ENCODE measurements at regions of chr1 and their contacts with region 1.

Region 1: DNA sequence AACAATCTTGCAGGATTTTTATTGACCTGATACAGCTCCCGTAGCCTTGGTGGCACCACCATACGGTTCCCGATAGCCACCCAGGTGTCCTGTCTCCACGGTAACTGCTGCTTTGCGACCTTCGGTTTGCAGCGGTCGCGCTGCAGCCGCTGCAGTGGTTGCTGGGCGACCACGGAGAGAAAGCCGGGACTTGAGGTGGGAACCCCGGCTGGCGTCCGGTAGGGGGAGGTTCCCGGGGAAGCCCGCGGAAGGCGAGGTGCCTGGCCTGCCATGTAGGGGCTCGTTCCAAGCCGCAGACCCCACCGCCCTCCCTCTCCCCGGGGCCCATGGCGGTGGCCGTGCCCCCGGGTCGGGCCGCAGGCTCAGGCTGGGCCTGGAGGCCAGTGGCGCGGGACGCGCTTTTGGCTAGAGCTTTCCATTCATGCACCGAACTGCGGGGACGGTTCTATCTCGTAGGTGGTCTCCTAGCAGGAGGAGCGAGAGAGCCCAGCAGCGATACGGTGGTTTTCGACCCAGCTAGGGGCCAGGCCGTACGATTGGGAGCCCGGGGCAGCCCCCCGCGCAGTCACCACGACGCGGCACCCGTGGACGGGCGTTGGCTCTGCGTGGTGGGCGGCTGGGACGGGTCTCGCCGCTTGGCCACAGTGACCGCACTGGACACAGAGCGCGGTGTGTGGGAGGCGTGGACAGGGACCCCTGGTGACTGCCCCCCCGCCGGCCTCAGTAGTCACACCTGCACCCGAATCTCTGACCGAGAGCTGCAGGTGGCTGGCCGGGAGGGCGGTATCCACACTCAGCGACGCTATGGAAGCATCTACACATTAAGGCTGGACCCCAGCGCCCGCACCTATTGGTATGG is at the start of gene KLHDC9:
- DNase-seq: peak; percentile 90 to 93 (median 93)
- ATAC-seq: peak; percentile 95
- H3K4me3 ChIP-seq: peak within 1 kb of the TSS; percentile 50
- H3K4me1 ChIP-seq: no peaks in the 10 kb centered on the region
- CTCF ChIP-seq: peak; percentile 8
- total RNA-seq, gene KLHDC9: 9.5 to 10.7 (median 9.7) TPM

Region 2: DNA sequence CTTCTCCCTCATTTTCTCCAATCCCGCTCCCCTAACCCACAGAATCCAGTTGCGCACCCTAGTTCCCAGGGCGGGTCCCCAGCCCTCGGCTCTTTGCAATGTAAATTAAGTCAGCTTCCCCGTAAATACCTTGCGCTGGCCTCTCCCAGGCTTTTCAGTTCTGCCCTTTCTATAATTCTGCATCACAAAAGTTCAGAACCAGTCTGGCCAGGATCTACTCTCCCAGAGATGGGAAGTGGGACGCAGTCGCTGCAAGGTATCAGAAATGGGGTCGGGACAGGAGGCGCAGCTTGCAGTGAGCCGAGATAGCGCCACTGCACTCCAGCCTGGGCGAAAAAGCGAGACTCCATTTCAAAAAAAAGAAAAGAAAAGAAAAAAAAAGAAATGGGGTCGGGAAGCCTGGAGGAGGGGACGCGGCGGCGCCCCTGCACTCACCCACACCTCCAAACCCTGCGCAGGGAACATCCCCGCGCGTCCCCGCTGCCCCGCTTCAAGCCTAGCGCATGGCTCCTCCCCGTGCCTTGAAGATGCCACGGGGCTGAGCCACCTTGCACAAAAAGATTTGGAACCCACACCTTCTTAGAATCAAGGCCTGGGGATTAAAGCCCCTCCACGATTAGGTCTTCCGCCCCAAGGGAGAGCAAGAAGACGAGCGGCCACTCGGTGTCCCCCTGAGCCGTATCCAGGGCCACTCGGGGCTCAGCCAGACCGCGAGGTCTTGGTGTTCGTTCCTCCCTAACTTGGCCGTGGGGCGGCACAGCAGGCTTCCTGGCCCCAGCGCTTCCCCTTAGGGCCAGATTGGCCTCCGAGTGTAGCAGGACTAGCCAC is 116.6 kb before region 1 on chr1:
- intact Hi-C with region 1: no loop called
- DNase-seq: no peak
- ATAC-seq: peak; percentile 28
- H3K4me3 ChIP-seq: no peak overlapping the region
- H3K4me1 ChIP-seq: no peaks in the 10 kb centered on the region
- CTCF ChIP-seq: no peak

Region 3: GRCh38 chr1:160997323-160998038 is 101.0 kb before region 1 on chr1:
- intact Hi-C with region 1: loop called (anchors 5 to 10 kb)
- DNase-seq: peak in 2 of 3 donors; percentile 78 to 86
- ATAC-seq: peak; percentile 87
- H3K4me3 ChIP-seq: no peak overlapping the region
- H3K4me1 ChIP-seq: peaks cover 3% of the 10 kb centered on the region
- CTCF ChIP-seq: peak; percentile 38

Region 4: DNA sequence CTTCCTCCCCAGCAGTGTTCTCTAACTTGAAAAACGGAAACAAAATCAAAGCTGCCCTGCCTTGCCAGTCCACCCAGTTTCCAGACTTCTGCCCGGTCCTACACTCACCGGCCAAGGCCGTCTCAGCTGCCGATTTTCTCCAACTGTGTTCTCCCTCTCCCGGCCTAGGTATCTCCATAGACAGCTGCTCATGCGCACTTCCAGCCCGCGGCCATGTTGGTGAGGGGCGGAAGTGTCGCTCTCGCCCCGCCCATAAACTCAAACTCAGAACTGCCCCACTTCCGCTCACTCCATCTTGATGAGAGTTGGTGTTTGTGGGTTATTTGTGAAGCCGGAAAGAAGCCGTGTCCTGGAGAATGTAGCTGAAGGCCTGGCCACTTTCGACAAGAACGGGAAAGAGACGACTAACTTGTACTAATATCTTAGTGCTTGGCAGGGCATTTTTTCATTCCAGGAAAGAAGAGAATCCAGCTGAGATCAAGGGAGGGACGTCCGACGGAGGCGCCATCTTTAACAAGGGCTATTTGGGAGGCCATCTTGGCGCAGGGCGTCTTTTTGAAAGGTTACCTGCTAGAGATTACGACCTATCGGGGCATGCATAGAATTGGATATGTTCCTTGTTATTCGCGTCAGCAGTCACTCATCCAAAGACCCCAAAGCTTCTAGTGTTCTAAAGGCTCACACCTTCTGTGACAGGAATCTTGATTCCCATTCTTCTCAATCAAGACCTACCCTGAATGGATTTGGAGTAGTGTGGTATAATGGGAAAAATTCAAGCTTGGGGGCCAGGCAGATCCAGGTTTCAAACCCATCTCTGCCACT is 52.5 kb before region 1 on chr1 and contains the start of gene USF1:
- intact Hi-C with region 1: loop called in 1 of 2 experiments (anchors 5 kb)
- DNase-seq: peak; percentile 95 to 96 (median 96)
- ATAC-seq: peak; percentile 94
- H3K4me3 ChIP-seq: peak within 1 kb of the TSS; percentile 74
- H3K4me1 ChIP-seq: peaks cover 7% of the 10 kb centered on the region
- CTCF ChIP-seq: no peak
- total RNA-seq, gene USF1: 66.8 to 80.5 (median 71.7) TPM

Region 5: DNA sequence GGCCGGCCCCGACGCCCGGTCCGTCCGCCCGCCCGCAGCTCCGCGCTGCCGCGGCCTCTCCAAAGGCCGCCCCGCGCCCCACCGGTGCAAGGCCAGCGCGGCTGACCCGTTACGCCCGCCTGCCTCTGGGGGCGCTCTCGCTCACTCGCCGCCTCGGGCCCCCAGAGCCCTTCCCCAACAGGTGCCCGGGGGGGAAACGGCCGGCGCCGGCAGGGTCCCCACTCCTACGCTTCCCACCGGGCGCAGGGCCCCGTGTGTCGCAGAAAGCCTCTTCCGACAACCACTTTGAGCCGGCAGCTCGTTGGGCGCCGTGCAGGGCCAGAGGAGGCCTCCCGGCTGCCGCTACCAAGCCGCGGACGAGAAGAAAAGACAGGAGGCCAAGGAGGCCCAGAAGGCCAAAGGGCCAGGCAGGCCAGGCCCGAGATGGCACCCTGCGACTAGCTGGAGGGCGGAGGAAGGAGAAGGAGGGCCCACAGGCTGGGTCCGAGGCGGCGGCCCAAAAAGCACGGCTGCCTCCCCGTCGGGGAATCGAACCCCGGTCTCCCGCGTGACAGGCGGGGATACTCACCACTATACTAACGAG is 342.0 kb after region 1 on chr1:
- intact Hi-C with region 1: no loop called
- DNase-seq: peak; percentile 63 to 76 (median 68)
- ATAC-seq: peak; percentile 42
- H3K4me3 ChIP-seq: no peak overlapping the region
- H3K4me1 ChIP-seq: no peaks in the 10 kb centered on the region
- CTCF ChIP-seq: peak; percentile 35